Upper lobe of right lung (tissue), 1 donor: ENCODE measurements at regions of chr18 and their contacts with region 1.

Region 1: DNA sequence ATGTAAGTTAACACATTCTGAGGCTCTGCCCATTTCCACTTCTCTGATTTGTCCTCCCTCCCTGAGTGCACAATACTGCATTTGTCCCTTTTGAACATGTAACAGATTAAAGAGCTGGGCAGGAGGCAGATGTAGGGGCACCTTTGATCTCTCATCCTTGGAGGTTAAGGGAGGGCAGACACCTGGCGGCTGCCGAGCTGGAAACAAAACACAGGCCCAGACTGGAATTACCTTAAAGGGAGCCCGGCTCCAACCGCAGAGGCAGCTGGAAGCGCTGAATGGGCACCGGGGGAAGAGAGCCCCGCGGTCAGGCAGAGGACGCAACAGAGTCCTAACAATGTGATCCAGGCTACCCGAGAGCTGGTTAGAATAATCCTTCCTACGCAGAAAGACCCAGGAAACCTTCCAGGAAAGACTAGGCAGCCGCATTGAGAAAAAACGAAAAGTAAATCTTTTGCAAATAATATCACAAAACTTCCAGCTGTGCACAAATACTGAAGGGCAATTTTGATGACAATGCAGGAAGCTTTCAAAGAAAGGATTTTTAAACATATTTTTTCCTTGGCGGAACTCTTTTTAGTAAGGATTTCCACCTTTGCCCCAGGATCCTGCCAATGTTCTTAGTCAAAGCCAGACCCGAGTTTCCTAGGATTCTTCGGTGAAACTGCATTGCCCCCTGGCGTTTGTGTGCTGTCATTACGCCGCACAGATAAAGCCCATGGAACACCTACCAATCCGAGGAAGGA is 216.0 kb downstream of the TGIF1 start:
- DNase-seq: peak; percentile 81
- ATAC-seq: peak; percentile 94
- H3K4me3 ChIP-seq: peak overlapping the region; percentile 14
- H3K27ac ChIP-seq: peak overlapping the region; percentile 51
- H3K4me1 ChIP-seq: peaks cover 12% of the 10 kb centered on the region
- H3K27me3 ChIP-seq: no peaks in the 10 kb centered on the region
- CTCF ChIP-seq: peak; percentile 97

Region 2: GRCh38 chr18:3281456-3282400 is 384.2 kb before region 1 on chr18:
- intact Hi-C with region 1: loop called (anchors 5 kb)
- DNase-seq: no peak
- ATAC-seq: peak; percentile 86
- H3K4me3 ChIP-seq: no peak overlapping the region
- H3K27ac ChIP-seq: no peak overlapping the region
- H3K4me1 ChIP-seq: peaks cover 7% of the 10 kb centered on the region
- H3K27me3 ChIP-seq: no peaks in the 10 kb centered on the region
- CTCF ChIP-seq: peak; percentile 75

Region 3: DNA sequence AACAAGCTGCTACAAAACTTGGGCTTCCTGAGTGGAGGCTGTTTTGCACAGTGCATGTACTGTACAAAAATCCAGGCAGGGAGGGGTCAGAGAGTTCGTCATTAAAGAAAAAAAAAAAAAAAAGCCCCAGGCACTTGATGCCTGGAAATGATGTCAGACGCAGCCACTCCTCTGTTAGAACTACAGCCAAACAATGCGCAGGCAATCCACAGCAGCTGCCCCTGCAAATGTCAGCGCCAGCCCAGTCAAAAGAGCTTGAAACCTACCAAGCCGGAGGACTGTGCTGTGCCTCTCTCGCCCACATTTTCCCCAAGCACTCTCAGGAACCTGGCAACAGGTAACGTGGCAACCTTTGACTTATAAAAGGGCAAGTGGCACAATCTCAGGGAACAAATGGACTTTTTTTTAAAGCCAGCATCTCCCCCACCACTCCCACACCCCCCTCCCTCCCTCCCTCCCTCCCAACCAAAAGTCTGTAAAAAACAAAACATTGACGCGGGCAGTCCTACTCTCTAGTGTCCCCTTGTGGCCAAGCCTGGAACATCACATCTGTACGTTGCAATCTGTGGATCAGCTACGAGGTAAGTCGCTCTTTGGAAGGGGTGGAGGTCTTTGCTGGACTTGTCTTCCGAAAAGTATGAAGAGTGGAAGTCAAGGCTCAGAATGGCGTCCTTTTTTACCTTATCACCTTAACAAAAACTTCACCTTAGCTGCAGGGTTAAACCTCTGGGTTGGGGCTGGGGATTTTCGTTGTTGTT is 71.9 kb before region 1 on chr18:
- intact Hi-C with region 1: loop called (anchors 10 kb)
- DNase-seq: peak; percentile 86
- ATAC-seq: peak; percentile 89
- H3K4me3 ChIP-seq: peak overlapping the region; percentile 60
- H3K27ac ChIP-seq: peak overlapping the region; percentile 98
- H3K4me1 ChIP-seq: peaks cover 50% of the 10 kb centered on the region
- H3K27me3 ChIP-seq: no peaks in the 10 kb centered on the region
- CTCF ChIP-seq: peak; percentile 84

Region 4: GRCh38 chr18:3782901-3783300 is 116.9 kb after region 1 on chr18:
- intact Hi-C with region 1: no loop called
- DNase-seq: no peak
- ATAC-seq: no peak
- H3K4me3 ChIP-seq: no peak overlapping the region
- H3K27ac ChIP-seq: no peak overlapping the region
- H3K4me1 ChIP-seq: no peaks in the 10 kb centered on the region
- H3K27me3 ChIP-seq: no peaks in the 10 kb centered on the region
- CTCF ChIP-seq: no peak